Activated CD4-positive, alpha-beta T cell treated with anti-CD3 and anti-CD28 coated beads for 36 hours (primary cell): ENCODE measurements at regions of chr9 and their contacts with region 1.

Region 1: GRCh38 chr9:133742849-133743444 is 4.8 kb upstream of the SARDH start:
- DNase-seq: peak; percentile 86
- ATAC-seq: peak; percentile 79
- H3K4me3 Mint-ChIP-seq: no peak overlapping the region
- H3K27ac Mint-ChIP-seq: no peak overlapping the region
- H3K4me1 Mint-ChIP-seq: peaks cover 7% of the 10 kb centered on the region
- H3K27me3 Mint-ChIP-seq: no peaks in the 10 kb centered on the region

Region 2: GRCh38 chr9:133532937-133533668 is 209.8 kb before region 1 on chr9:
- CTCF ChIA-PET with region 1: interaction called, 4 read pairs
- POLR2A ChIA-PET with region 1: no interaction called
- intact Hi-C with region 1: loop called in 1 of 2 experiments (anchors 5 kb)
- DNase-seq: peak; percentile 89
- ATAC-seq: peak; percentile 82
- H3K4me3 Mint-ChIP-seq: peak overlapping the region; percentile 16
- H3K27ac Mint-ChIP-seq: no peak overlapping the region
- H3K4me1 Mint-ChIP-seq: peaks cover 15% of the 10 kb centered on the region
- H3K27me3 Mint-ChIP-seq: peaks cover 4% of the 10 kb centered on the region